Heart left ventricle (tissue), 16 donors: ENCODE measurements at regions of chr1 and their contacts with region 1.

Region 1: GRCh38 chr1:77882411-77882810 is 6.0 kb upstream of the NEXN start:
- DNase-seq: no peak
- ATAC-seq: no peak
- H3K4me3 ChIP-seq: no peak overlapping the region
- H3K27ac ChIP-seq: no peak overlapping the region
- H3K4me1 ChIP-seq: peaks cover 0 to 5% (median 0%) of the 10 kb centered on the region in 12 donors
- H3K27me3 ChIP-seq: no peaks in the 10 kb centered on the region
- CTCF ChIP-seq: no peak
- POLR2A ChIP-seq: no peak

Region 2: DNA sequence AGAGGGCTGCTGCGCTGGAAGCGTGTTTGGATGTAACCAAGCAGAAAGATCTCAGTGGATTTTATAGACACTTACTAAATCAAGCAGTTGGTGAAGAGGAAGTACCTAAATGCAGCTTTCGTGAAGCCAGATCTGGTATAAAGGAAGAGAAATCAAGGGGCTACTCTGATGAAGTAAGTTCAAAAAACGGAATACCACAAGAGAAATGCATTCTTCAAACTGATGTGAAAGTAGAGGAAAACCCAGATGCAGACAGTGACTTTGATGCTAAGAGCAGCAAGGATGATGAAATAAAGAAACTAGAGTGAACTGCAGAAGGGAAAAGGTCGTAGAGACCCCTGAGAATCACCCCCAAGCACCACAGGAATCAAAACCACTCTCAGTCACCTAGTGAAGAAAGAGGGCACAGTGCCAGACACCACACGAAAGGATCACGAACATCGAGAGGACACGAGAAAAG is 34.8 kb before region 1 on chr1:
- intact Hi-C with region 1: loop called in 1 of 10 experiments (anchors 5 kb)
- DNase-seq: no peak
- ATAC-seq: no peak
- H3K4me3 ChIP-seq: no peak overlapping the region
- H3K27ac ChIP-seq: no peak overlapping the region
- H3K4me1 ChIP-seq: peaks cover 0 to 9% (median 0%) of the 10 kb centered on the region in 12 donors
- H3K27me3 ChIP-seq: no peaks in the 10 kb centered on the region
- CTCF ChIP-seq: no peak
- POLR2A ChIP-seq: no peak

Region 3: DNA sequence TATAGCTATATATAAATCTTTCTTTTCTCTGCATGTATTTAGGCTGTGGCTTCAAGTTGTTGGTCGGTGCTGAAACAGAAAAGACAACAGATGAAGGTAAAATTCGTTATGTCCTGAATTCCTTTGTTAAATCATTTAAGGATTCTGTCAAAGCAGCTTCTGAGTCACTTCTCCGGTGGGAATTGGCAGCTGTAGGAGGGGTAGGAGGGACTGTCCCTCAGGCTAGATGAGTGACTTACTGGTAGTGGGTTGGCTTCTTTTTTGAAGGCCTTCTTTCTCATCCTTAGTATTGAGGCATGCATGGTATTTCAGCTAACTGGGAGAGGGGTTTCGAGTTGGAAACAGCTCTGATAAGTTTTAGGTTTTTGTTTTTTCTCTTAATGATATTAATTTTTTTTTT is 16.1 kb before region 1 on chr1:
- intact Hi-C with region 1: no loop called
- DNase-seq: no peak
- ATAC-seq: no peak
- H3K4me3 ChIP-seq: no peak overlapping the region
- H3K27ac ChIP-seq: no peak overlapping the region
- H3K4me1 ChIP-seq: no peaks in the 10 kb centered on the region
- H3K27me3 ChIP-seq: no peaks in the 10 kb centered on the region
- CTCF ChIP-seq: no peak
- POLR2A ChIP-seq: no peak

Region 4: GRCh38 chr1:77950873-77951272 is 68.5 kb after region 1 on chr1:
- intact Hi-C with region 1: no loop called
- DNase-seq: no peak
- ATAC-seq: no peak
- H3K4me3 ChIP-seq: no peak overlapping the region
- H3K27ac ChIP-seq: peak overlapping the region in 2 of 12 donors; percentile 1 to 7
- H3K4me1 ChIP-seq: peaks cover 0 to 20% (median 11%) of the 10 kb centered on the region in 12 donors
- H3K27me3 ChIP-seq: no peaks in the 10 kb centered on the region
- CTCF ChIP-seq: no peak
- POLR2A ChIP-seq: no peak